ENCODE measurements at regions of chr20 and their contacts with region 1.

Region 1: DNA sequence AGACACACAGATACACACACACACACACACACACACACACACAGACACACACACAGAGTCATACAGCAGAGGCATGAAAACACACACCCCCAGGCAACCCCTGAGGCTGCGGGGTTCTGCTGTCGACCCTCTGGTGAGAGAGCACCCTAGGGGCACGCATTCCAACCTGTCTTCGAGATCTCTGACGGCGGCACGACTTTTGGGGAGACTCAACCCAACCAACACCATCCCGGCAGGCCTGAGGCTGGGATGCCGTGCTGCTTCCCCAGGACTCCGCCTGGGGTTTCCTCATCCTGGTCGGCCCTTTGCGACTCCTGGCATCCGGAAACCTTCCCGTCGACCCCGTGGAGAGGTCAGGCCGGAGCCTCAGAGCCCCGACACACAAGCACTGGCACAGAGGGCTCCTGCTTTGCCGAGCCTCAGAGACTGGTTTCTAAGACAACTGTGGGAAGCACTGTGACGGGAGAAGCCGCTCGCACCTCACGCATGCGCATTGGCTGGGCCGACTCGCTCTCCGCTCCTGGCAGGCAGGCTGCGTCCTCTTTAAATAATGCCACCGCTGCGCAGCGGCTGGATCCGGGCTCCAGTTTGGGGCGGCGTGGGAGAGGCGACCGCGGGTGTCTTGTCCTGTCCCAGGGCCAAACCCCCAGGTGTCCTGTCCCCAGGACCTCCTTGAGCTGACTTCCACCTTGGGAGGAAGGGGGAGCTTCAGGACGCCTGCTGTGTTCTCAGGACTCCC is 168.9 kb upstream of the ZNF337 start:
- ATAC-seq: peak; percentile 27 to 59 (median 47)
- H3K4me3 ChIP-seq: peak overlapping the region; percentile 27 to 40 (median 36)
- H3K27ac ChIP-seq: no peak overlapping the region
- H3K4me1 ChIP-seq: peaks cover 10 to 29% of the 10 kb centered on the region in 2 donors

Region 2: DNA sequence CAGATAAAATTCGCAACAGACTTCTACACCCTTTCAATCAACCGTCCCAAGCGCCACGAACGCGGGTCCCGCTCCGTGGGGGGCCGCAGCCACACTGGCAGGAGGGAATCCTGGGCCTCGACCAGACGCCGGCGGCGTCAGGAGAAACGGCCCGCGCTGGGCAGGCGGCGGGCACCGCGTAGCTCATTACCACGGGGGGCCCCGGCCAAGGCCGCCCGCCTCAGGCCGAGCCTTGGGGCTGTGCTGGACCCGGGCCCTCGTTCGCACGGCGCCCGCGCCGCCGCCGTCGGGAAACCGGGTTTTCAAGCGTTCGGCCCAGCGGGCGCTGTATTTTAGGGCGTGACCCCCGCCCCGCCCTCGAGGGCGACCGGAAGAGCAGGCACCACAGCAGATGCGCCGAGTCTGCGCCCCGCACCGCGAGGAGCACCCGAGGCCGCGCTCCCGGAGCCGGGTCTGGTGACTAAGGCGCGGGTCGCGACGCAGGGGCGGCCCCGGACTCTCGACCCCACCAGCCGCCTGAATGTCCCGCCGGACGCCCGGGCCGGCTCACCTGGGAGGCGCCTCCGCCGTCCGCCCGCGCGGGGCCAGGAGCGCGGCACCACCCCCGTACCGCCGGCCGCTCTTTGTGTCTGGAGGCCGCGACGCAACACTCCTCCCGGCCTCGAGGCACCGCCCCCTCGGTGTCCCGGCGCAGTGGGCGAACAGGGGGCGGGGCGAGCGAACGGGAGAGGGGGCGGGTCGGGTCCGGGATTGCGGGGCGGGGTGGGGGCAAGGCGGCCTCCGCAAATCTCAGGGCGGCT is 280.4 kb before region 1 on chr20 and contains the start of gene NINL:
- in situ Hi-C with region 1: loop called in 1 of 9 experiments (anchors 25 kb)
- ATAC-seq: peak; percentile 86 to 92 (median 90)
- H3K4me3 ChIP-seq: peak within 1 kb of the TSS; percentile 56 to 94 (median 80)
- H3K27ac ChIP-seq: peak within 1 kb of the TSS; percentile 90 to 91
- H3K4me1 ChIP-seq: peaks cover 13 to 20% of the 10 kb centered on the region in 2 donors
- total RNA-seq, gene NINL: 15.0 to 57.5 (median 18.9) TPM

Region 3: GRCh38 chr20:25668446-25668845 is 197.1 kb before region 1 on chr20:
- in situ Hi-C with region 1: no loop called
- ATAC-seq: no peak
- H3K4me3 ChIP-seq: no peak overlapping the region
- H3K27ac ChIP-seq: no peak overlapping the region
- H3K4me1 ChIP-seq: no peaks in the 10 kb centered on the region

Region 4: GRCh38 chr20:25696384-25697131 is 169.0 kb before region 1 on chr20 and contains the start of gene ZNF337:
- in situ Hi-C with region 1: loop called in 1 of 9 experiments (anchors 25 kb)
- ATAC-seq: peak; percentile 86 to 98 (median 97)
- H3K4me3 ChIP-seq: peak within 1 kb of the TSS; percentile 56 to 75 (median 68)
- H3K27ac ChIP-seq: peak within 1 kb of the TSS; percentile 93 to 94
- H3K4me1 ChIP-seq: peaks cover 8 to 13% of the 10 kb centered on the region in 2 donors
- total RNA-seq, gene ZNF337: 10.0 to 25.0 (median 15.3) TPM

Measured in motor neuron (in vitro differentiated cells).